SK-N-SH (cell line): ENCODE measurements at regions of chr1 and their contacts with region 1.

Region 1: DNA sequence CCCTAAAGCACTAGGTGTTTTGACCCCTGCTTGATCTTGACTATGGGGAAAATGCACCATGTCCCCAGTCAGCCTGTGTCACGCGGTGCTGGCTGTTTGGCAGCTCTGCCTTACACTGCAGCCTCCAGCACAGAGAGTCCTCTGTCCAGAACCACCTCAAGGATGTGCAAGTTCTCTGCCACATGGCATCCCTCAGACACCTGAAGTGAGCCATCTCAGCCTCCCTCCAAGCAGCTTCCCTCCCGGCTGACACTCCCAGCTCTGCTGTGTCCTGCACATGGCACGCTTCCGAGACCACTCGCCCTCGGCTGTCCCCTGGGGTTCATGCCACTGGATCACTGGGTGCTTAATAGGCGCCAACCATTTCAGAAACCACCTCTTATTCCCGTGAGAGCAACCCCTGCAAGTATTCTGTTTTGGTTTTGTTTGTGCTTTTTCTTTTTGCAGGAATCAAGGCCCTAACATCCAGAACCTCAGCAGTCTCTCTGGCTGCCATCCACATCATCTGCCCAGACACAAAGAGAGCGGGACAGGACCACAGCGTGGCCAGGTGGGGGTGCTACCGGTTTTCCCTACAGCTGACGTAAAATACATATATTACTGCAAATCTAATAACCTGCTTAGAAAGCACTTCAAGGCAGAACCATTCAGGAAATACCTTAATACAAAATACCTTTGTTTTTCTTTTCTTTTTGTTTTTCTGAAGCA is 45.7 kb downstream of the CAPZB start:
- DNase-seq: peak; percentile 82
- H3K4me3 ChIP-seq: no peak overlapping the region
- H3K27ac ChIP-seq: peak overlapping the region; percentile 62 to 64
- H3K4me1 ChIP-seq: peaks cover 65 to 72% of the 10 kb centered on the region in 2 experiments
- H3K27me3 ChIP-seq: no peaks in the 10 kb centered on the region
- CTCF ChIP-seq: peak; percentile 53
- EP300 ChIP-seq: no peak
- RAD21 ChIP-seq: peak; percentile 79

Region 2: DNA sequence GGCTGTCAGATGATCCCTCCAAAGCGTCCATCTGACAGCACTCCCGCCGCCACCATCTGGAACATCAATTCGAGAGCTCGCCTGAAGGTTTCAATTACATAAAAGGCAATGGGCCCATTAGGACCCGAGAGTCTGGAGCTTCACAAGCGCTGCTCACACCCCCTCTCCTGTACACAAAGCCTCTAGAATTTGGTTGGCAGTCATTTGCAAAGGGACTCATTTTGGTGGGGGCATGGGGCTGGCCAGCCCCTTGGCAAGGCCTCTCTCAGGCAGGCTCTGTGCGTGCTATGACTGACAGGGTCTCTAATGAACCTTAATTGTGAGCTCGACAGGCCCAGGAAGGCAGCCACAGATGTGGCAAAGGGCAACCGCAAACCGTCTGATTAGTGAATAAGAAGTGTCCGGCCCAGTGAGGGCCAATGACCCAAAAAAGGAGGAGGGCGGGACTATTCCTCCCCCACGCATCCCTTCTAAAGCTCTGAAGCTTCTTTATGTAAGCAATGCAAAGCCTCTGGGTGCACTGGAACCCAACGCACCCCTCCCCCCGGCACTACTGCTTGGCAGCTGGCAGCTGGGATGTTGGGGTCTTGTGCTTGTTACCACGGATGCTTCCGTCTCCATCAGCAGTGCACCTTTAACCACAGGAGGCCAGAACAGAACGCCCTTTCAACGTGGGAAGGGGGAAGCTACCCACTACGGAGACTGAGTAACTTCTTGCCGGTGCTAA is 33.7 kb before region 1 on chr1:
- CTCF ChIA-PET with region 1: interaction called, 15 read pairs
- POLR2A ChIA-PET with region 1: no interaction called
- DNase-seq: peak; percentile 72
- H3K4me3 ChIP-seq: no peak overlapping the region
- H3K27ac ChIP-seq: peak overlapping the region in 1 of 2 experiments; percentile 95; a peak in 2 of 4 replicates
- H3K4me1 ChIP-seq: peaks cover 6 to 64% of the 10 kb centered on the region in 2 experiments; a peak in 3 of 4 replicates
- H3K27me3 ChIP-seq: no peaks in the 10 kb centered on the region
- CTCF ChIP-seq: no peak
- EP300 ChIP-seq: peak in 1 of 2 experiments; percentile 44; a peak in 1 of 4 replicates
- RAD21 ChIP-seq: no peak

Region 3: GRCh38 chr1:19478322-19478721 is 38.7 kb after region 1 on chr1:
- CTCF ChIA-PET with region 1: interaction called, 12 read pairs
- POLR2A ChIA-PET with region 1: no interaction called
- DNase-seq: no peak
- H3K4me3 ChIP-seq: no peak overlapping the region
- H3K27ac ChIP-seq: no peak overlapping the region; a peak in 1 of 4 replicates
- H3K4me1 ChIP-seq: peaks cover 14 to 64% of the 10 kb centered on the region in 2 experiments; a peak in 3 of 4 replicates
- H3K27me3 ChIP-seq: no peaks in the 10 kb centered on the region
- CTCF ChIP-seq: no peak
- EP300 ChIP-seq: no peak
- RAD21 ChIP-seq: no peak

Region 4: DNA sequence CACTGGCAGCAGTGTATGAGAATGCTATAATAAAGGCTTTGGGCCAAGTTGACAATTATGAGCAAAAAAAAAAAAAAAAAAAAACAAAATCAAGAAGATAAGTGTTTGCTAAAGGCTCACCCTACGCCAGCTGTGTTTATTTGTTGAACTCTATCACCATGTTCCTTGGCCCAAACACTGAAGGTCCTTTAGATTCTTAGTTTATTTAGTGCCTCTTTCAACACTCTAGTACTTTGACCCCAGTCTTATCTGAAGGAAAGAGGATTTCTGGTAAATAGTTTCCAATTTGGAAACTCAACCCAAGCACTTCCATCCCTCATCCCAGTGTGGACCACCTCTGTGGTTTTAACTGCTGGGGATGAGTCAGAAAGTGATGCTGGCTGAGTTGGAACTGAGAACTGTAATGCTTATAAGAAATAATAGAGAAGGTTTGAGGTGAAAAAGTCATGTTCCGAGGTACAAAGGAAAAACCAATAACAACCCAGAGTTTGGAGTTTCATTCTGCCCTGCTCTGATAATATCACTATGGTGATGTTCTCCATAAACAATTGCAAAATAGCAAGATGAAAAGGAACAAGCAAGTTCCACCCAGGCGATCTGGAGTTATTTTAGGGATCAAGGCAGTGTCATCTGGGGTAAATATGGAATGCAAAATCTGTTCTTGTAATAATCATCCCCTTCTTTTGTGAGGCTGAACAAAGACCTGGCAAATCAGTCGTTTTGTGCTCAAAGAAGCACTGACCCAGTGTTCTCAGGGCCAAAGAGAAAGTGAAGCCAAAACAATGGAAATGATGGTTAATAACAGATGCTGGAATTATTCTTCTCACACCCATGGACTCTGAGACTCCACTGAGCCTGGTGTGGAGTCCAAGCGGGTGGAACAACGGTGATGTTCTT is 65.4 kb after region 1 on chr1:
- CTCF ChIA-PET with region 1: no interaction called
- POLR2A ChIA-PET with region 1: no interaction called
- DNase-seq: no peak
- H3K4me3 ChIP-seq: no peak overlapping the region
- H3K27ac ChIP-seq: peak overlapping the region in 1 of 2 experiments; percentile 45; a peak in 2 of 4 replicates
- H3K4me1 ChIP-seq: no peaks in the 10 kb centered on the region; a peak in 1 of 4 replicates
- H3K27me3 ChIP-seq: no peaks in the 10 kb centered on the region
- CTCF ChIP-seq: no peak
- EP300 ChIP-seq: no peak
- RAD21 ChIP-seq: no peak

Region 5: DNA sequence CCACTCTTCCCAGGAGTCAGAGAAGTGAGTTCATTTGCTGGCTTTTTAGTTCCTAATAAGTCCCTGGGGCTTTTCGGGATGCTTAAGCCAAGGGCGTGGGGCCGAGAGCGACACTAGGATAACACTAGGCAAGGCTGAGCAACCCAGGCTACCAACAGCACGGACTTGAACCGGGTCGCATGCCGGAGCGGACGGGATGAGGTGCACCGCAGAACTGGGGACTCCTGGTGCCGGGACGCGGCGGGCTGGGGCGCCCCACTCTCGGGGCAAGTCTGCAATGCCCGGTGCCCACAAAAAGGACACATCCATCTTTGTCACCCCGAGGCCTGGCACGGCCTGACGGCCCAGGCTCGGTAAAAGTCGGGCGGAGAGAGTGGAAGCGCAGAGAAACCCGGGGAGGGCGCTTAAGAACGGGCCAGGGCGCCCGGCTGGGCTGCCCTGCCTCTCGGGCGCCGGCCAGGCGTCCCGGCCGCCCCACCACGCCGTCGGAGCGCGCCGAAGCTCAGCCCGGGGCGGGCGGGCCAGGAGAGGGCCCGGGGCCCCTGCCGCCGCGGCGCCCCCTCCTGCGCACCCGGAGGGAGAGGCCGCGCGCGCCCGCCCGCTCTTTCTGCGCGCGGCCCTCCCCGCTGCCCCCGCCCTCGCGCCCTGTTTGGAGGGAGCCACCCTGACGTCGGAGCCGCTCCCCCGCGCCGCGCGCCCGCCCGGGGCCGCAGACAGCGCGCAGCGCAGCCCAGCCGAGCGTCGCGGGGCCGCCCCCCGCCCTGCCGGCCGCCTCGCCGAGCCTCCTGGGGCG is 204.2 kb after region 1 on chr1 and contains the start of gene NBL1:
- CTCF ChIA-PET with region 1: interaction called, 24 read pairs
- POLR2A ChIA-PET with region 1: no interaction called
- DNase-seq: peak; percentile 93
- H3K4me3 ChIP-seq: peak within 1 kb of the TSS; percentile 66 to 74
- H3K27ac ChIP-seq: peak within 1 kb of the TSS in 1 of 2 experiments; percentile 80; a peak in 2 of 4 replicates
- H3K4me1 ChIP-seq: peaks cover 0 to 25% of the 10 kb centered on the region in 2 experiments; a peak in 1 of 4 replicates
- H3K27me3 ChIP-seq: no peaks in the 10 kb centered on the region
- CTCF ChIP-seq: no peak
- EP300 ChIP-seq: no peak
- RAD21 ChIP-seq: no peak
- polyA plus RNA-seq, gene NBL1: 34.9 and 36.1 TPM in 2 replicates

Region 6: DNA sequence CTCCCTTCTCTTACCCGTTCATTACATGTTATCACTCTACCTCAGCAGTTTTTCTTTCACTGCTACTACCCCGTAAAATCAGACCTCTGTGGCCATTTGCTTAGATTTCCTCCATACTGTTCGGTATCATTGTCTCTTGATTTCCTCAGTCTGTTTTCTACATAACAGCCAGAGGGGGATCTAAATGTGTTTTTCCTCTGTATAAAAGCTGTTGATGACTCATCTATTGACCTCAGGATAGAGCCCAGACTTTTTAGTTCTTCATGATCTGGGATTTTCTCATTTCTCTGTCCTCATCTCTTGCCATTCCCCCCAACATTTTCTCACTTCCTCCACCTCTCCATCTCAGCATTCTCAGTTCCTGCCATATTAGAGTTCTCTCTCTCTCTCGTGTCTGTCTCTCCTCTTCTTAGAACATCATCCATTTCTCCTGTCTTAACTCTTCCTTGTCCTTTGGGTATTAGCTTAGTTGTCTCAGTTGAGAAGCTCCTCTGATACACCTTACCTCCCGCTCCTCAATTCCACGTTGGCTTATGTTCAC is 453.1 kb after region 1 on chr1:
- CTCF ChIA-PET with region 1: no interaction called
- POLR2A ChIA-PET with region 1: no interaction called
- DNase-seq: no peak
- H3K4me3 ChIP-seq: no peak overlapping the region
- H3K27ac ChIP-seq: no peak overlapping the region
- H3K4me1 ChIP-seq: no peaks in the 10 kb centered on the region
- H3K27me3 ChIP-seq: no peaks in the 10 kb centered on the region
- CTCF ChIP-seq: no peak
- EP300 ChIP-seq: no peak
- RAD21 ChIP-seq: no peak